ENCODE measurements at regions of chr1 and their contacts with region 1.

Region 1: GRCh38 chr1:160244209-160244608 is 18.1 kb downstream of the DCAF8 start:
- DNase-seq: no peak
- H3K4me3 ChIP-seq: no peak overlapping the region
- H3K27ac ChIP-seq: peak overlapping the region in 1 of 2 experiments; percentile 44
- H3K4me1 ChIP-seq: no peaks in the 10 kb centered on the region
- H3K27me3 ChIP-seq: no peaks in the 10 kb centered on the region

Region 2: GRCh38 chr1:160219062-160219929 is 24.9 kb before region 1 on chr1:
- CTCF ChIA-PET with region 1: interaction called, 22 read pairs
- POLR2A ChIA-PET with region 1: no interaction called
- DNase-seq: peak; percentile 15 to 40 (median 34)
- H3K4me3 ChIP-seq: no peak overlapping the region
- H3K27ac ChIP-seq: no peak overlapping the region
- H3K4me1 ChIP-seq: no peaks in the 10 kb centered on the region
- H3K27me3 ChIP-seq: no peaks in the 10 kb centered on the region

Region 3: GRCh38 chr1:160226623-160227022 is 17.6 kb before region 1 on chr1:
- CTCF ChIA-PET with region 1: interaction called, 101 read pairs
- POLR2A ChIA-PET with region 1: no interaction called
- DNase-seq: no peak
- H3K4me3 ChIP-seq: no peak overlapping the region
- H3K27ac ChIP-seq: no peak overlapping the region
- H3K4me1 ChIP-seq: no peaks in the 10 kb centered on the region
- H3K27me3 ChIP-seq: no peaks in the 10 kb centered on the region

Region 4: GRCh38 chr1:160232911-160233310 is 11.3 kb before region 1 on chr1:
- CTCF ChIA-PET with region 1: interaction called, 101 read pairs
- POLR2A ChIA-PET with region 1: interaction called, 3 read pairs
- DNase-seq: peak; percentile 14 to 52 (median 49)
- H3K4me3 ChIP-seq: no peak overlapping the region
- H3K27ac ChIP-seq: peak overlapping the region; percentile 50 to 59
- H3K4me1 ChIP-seq: no peaks in the 10 kb centered on the region
- H3K27me3 ChIP-seq: no peaks in the 10 kb centered on the region